A673 (cell line): ENCODE measurements at regions of chr17 and their contacts with region 1.

Region 1: GRCh38 chr17:21090902-21091618 is 35.7 kb upstream of the DHRS7B start:
- DNase-seq: no peak
- H3K4me3 ChIP-seq: no peak overlapping the region
- H3K27ac ChIP-seq: no peak overlapping the region
- H3K4me1 ChIP-seq: no peaks in the 10 kb centered on the region
- H3K27me3 ChIP-seq: no peaks in the 10 kb centered on the region
- CTCF ChIP-seq: no peak

Region 2: GRCh38 chr17:21119247-21119918 is 28.3 kb after region 1 on chr17:
- CTCF ChIA-PET with region 1: interaction called, 11 read pairs
- POLR2A ChIA-PET with region 1: no interaction called
- intact Hi-C with region 1: no loop called
- DNase-seq: peak; percentile 69
- H3K4me3 ChIP-seq: peak overlapping the region; percentile 15
- H3K27ac ChIP-seq: no peak overlapping the region
- H3K4me1 ChIP-seq: no peaks in the 10 kb centered on the region
- H3K27me3 ChIP-seq: peaks cover 10% of the 10 kb centered on the region
- CTCF ChIP-seq: peak; percentile 92

Region 3: GRCh38 chr17:21495281-21495680 is 404.2 kb after region 1 on chr17:
- CTCF ChIA-PET with region 1: no interaction called
- POLR2A ChIA-PET with region 1: no interaction called
- intact Hi-C with region 1: no loop called
- DNase-seq: no peak
- H3K4me3 ChIP-seq: no peak overlapping the region
- H3K27ac ChIP-seq: no peak overlapping the region
- H3K4me1 ChIP-seq: no peaks in the 10 kb centered on the region
- H3K27me3 ChIP-seq: peaks cover 4% of the 10 kb centered on the region
- CTCF ChIP-seq: no peak